HepG2 (cell line): ENCODE measurements at regions of chr9 and their contacts with region 1.

Region 1: GRCh38 chr9:86275962-86276361 is 6.4 kb downstream of the ISCA1 start:
- DNase-seq: no peak
- ATAC-seq: no peak
- H3K4me3 ChIP-seq: no peak overlapping the region
- H3K27ac ChIP-seq: no peak overlapping the region
- H3K4me1 ChIP-seq: peaks cover 37% of the 10 kb centered on the region
- H3K27me3 ChIP-seq: no peaks in the 10 kb centered on the region
- CTCF ChIP-seq: no peak
- EP300 ChIP-seq: no peak
- POLR2A ChIP-seq: no peak
- RAD21 ChIP-seq: no peak; the same call in 1 of the 2 replicates

Region 2: GRCh38 chr9:86202338-86202882 is 73.6 kb before region 1 on chr9:
- CTCF ChIA-PET with region 1: no interaction called
- POLR2A ChIA-PET with region 1: no interaction called
- in situ Hi-C with region 1: no loop called
- intact Hi-C with region 1: loop called (anchors 5 kb)
- DNase-seq: peak; percentile 16
- ATAC-seq: peak; percentile 83
- H3K4me3 ChIP-seq: no peak overlapping the region
- H3K27ac ChIP-seq: no peak overlapping the region
- H3K4me1 ChIP-seq: no peaks in the 10 kb centered on the region
- H3K27me3 ChIP-seq: no peaks in the 10 kb centered on the region; a peak in 1 of 5 replicates
- CTCF ChIP-seq: peak; percentile 72
- EP300 ChIP-seq: no peak
- POLR2A ChIP-seq: no peak
- RAD21 ChIP-seq: no peak